ENCODE measurements at regions of chr1 and their contacts with region 1.

Region 1: DNA sequence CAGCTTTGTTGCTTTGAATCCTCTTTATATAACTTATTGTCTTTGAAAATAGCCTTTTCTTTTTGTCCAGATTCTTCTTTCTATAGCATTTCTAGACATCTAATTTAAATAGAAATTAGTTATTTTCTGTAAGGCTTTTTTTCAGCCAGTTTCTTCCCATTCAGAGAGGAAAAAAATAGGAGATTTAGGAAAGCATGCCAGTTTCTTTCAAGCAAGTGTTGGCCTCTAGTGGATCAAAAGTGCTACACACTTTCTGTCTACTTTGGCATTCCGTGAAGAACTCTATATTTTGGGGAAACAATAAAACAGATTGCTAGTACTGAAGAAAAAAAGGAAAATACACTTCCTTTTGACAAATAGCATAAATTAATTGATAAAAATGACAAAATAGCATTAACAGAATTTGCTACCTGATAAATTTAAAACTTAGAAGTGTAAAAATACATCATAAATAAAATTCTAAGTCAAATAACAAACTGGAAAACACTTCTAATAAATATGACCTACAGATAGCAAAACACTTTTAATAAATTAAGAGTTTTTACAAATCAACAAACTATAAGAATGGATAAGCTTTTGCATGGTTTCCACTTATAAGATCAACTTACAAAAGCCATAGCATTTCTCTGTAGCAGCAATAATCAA is 13.1 kb upstream of the EXO1 start:
- DNase-seq: no peak
- H3K4me3 ChIP-seq: no peak overlapping the region
- H3K27ac ChIP-seq: no peak overlapping the region
- H3K27me3 ChIP-seq: no peaks in the 10 kb centered on the region
- CTCF ChIP-seq: peak in 55 of 56 donors; percentile 42 to 82 (median 71)

Region 2: DNA sequence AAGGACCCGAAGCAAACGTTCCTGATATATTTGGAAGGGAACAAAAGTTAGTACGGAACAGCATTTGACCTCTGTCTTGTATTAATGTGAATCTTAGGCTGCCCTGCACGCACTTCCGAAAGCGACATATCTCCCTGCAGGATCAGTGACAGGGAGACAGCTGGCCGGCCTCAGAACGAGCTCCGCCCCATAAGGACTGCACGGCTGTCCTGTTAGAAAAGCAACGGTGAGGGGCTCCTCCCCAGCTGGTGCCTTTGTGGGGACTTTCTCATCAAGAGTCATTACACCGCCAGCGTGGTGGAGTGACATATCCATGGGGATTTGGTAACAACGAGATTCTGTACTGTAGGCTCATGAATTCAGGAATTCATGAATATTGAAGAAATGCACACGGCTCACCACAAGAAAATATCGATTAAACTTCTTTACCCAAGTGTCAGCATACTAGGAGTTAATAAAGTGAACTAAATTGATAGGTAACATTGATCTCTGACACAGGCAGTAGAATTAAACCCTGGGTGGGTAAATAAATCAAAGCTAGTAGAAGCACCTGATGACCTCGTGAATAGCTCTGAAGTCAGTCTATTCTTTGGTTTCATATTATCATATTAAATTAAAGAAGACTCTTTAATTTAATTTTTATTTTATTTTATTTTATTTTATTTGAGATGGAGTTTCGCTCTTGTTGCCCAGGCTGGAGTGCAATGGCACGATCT is 1214.8 kb before region 1 on chr1:
- intact Hi-C with region 1: no loop called
- DNase-seq: no peak
- H3K4me3 ChIP-seq: peak overlapping the region in 13 of 59 donors; percentile 0 to 45 (median 12)
- H3K27ac ChIP-seq: no peak overlapping the region
- H3K27me3 ChIP-seq: peaks cover 0 to 16% (median 0%) of the 10 kb centered on the region in 45 donors
- CTCF ChIP-seq: no peak

Region 3: DNA sequence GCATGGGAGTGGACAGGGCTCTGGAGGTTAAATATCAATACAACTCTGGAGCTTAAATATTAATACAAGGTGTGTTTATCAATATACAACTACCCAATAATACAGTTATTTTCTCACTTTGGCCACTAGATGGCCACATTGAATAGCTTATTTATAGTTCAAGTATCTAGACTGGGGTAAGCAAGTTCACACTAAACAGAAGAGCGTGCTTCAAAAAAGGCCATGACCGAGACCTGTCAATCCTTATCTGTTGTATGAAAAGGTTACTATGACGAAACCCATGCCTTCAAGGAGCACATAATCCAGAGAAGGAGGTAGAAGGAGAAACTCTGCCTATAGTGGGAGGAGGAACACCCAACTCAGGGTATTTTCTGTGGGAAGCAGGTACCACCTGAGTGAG is 223.8 kb before region 1 on chr1:
- intact Hi-C with region 1: loop called (anchors 2 kb)
- DNase-seq: no peak
- H3K4me3 ChIP-seq: no peak overlapping the region
- H3K27ac ChIP-seq: peak overlapping the region in 7 of 59 donors; percentile 6 to 33 (median 27)
- H3K27me3 ChIP-seq: no peaks in the 10 kb centered on the region
- CTCF ChIP-seq: peak; percentile 66 to 90 (median 79)

Region 4: DNA sequence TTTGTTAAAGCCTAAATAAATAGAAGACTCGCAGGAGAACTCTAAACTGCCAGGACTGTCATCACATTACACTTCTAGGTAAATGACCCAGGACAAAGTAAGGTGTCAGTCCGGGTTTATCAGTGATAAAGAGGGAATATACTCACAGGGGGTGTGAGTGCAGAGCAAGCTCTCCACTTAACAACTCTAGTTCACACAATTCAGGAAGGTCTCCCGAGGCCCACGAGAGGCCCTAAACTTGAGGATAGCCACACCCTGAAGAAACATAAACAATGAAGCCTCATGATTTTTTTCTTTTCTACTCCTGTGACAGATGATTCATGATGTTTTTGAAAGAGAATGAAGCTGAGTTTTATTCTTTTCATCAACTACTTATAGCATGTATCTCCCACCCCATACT is 52.5 kb before region 1 on chr1:
- intact Hi-C with region 1: no loop called
- DNase-seq: no peak
- H3K4me3 ChIP-seq: no peak overlapping the region
- H3K27ac ChIP-seq: no peak overlapping the region
- H3K27me3 ChIP-seq: peaks cover 0 to 2% (median 0%) of the 10 kb centered on the region in 45 donors
- CTCF ChIP-seq: no peak

Measured in dorsolateral prefrontal cortex (tissue), 120 donors.